ENCODE measurements at regions of chr12 and their contacts with region 1.

Region 1: DNA sequence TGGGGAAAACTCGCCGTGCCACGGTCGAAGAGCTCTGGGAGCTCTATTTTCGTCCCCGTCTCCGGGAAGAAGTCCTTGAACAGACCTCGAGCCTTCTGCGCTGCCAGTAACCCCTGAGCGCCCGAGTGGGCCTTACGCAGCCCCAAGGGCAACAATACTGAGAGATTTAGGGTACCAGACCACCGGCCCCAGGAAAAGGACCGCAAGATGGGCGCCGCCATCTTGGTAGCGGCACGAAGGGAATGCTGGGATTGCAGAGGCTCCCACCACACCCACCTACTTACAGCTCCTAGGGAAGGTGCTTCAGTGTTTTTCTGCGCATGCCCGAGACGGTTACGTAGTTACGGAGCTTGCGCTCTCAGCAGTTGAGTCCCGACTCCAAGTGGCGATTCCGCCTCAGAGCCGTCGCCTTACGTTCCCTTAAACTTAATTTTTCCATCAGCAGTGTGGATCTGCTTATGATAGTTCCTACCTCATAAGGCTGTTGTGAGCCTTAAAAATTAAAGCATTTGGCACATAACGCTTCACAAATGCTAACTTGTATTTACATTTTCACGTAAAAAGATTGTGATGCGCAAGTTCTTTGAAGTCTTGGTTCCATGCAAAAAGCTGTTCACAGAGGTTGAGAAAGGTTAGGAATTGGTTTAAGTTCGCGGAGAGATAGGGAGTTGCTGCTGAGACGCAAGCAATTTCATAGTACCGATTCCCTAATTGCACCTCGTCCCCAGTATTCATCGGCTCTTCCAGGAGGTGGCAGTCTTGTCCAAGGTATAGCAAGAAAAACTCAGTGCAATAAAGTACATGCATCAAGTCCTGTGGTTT is at the start of gene YARS2:
- DNase-seq: peak; percentile 92
- ATAC-seq: peak; percentile 94
- H3K4me3 ChIP-seq: peak within 1 kb of the TSS; percentile 77
- H3K27ac ChIP-seq: peak within 1 kb of the TSS; percentile 89
- H3K4me1 ChIP-seq: no peaks in the 10 kb centered on the region
- H3K27me3 ChIP-seq: no peaks in the 10 kb centered on the region
- CTCF ChIP-seq: peak; percentile 73 to 91 (median 77)
- EP300 ChIP-seq: no peak
- POLR2A ChIP-seq: peak; percentile 88
- RAD21 ChIP-seq: peak; percentile 98
- polyA plus RNA-seq, gene YARS2: 13.4 to 20.0 TPM

Region 2: DNA sequence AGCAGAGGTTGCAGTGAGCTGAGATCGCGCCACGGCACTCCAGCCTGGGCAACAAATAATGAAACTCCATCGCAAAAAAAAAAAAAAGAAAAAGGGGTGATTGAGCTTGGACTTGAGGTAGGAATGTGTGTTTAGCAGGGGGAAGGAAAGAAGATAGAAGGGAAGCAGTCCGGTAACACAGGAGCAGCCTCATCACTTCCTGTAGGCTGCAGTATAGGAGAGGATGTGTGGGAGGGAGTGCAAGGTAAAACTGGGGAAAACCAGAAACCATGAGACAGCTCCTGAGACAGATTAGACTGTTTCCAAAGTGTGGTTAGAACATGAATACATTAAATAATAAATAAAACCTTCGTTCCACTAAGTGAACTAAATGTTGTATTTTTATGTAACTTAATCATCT is 307.3 kb before region 1 on chr12:
- CTCF ChIA-PET with region 1: interaction called, 21 read pairs
- POLR2A ChIA-PET with region 1: no interaction called
- RAD21 ChIA-PET with region 1: interaction called, 3 read pairs
- SMC1A ChIA-PET with region 1: interaction called, 20 read pairs
- in situ Hi-C with region 1: no loop called
- intact Hi-C with region 1: no loop called
- DNase-seq: no peak
- ATAC-seq: peak; percentile 57
- H3K4me3 ChIP-seq: no peak overlapping the region
- H3K27ac ChIP-seq: no peak overlapping the region
- H3K4me1 ChIP-seq: no peaks in the 10 kb centered on the region; the same call in 1 of the 2 replicates
- H3K27me3 ChIP-seq: no peaks in the 10 kb centered on the region
- CTCF ChIP-seq: peak in 2 of 3 experiments; percentile 9 to 25; a peak in 2 of 6 replicates
- EP300 ChIP-seq: no peak
- POLR2A ChIP-seq: no peak
- RAD21 ChIP-seq: no peak

Region 3: DNA sequence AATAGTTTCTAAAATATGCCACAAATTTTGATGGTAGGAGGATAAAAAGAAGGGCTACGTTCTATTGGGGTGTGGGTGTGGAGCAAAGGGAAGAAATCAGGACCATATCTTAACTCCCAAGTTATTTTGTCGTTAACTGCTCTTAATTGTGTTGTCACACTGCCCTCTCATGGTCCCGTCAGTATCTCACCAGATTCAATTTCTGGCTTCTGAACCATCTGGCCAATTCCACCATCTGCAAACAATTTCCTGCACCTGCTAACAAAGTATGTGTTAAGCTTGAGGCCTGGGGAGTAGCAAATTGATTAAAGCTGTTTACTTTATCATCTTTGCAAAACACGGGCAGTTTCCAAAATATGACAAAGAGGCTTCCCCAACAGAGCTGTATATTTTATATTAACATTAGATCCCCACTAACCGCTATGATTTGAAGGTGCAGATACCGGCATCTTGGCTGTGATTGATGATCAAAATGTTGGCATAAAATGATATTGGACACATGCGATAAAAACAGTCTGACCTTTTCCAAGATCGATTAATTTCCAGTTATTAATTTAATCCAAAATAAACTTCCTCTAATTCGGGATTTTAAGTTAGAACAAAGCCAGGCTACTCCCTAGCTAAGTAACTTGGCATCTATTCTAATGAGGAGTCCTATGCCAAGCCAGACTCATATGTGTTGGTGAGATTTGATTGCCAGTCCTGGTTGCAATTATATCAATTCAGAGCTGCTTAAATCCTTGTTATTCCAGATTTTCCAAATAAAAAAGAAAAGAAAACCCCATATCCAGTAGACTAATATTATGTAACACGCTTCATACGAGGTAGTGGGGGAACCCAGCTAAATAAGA is 83.7 kb before region 1 on chr12:
- CTCF ChIA-PET with region 1: interaction called, 26 read pairs
- POLR2A ChIA-PET with region 1: interaction called, 4 read pairs
- RAD21 ChIA-PET with region 1: interaction called, 23 read pairs
- SMC1A ChIA-PET with region 1: interaction called, 11 read pairs
- in situ Hi-C with region 1: no loop called
- intact Hi-C with region 1: no loop called
- DNase-seq: no peak
- ATAC-seq: peak; percentile 74
- H3K4me3 ChIP-seq: no peak overlapping the region
- H3K27ac ChIP-seq: no peak overlapping the region
- H3K4me1 ChIP-seq: peaks cover 10% of the 10 kb centered on the region
- H3K27me3 ChIP-seq: no peaks in the 10 kb centered on the region
- CTCF ChIP-seq: peak; percentile 56 to 76 (median 72); a peak in 5 of 6 replicates
- EP300 ChIP-seq: no peak
- POLR2A ChIP-seq: no peak
- RAD21 ChIP-seq: peak; percentile 87

Region 4: GRCh38 chr12:32706335-32707024 is 49.4 kb before region 1 on chr12:
- CTCF ChIA-PET with region 1: interaction called, 15 read pairs
- POLR2A ChIA-PET with region 1: interaction called, 3 read pairs
- RAD21 ChIA-PET with region 1: interaction called, 3 read pairs
- SMC1A ChIA-PET with region 1: interaction called, 6 read pairs
- in situ Hi-C with region 1: no loop called
- intact Hi-C with region 1: no loop called
- DNase-seq: no peak
- ATAC-seq: no peak
- H3K4me3 ChIP-seq: no peak overlapping the region
- H3K27ac ChIP-seq: no peak overlapping the region
- H3K4me1 ChIP-seq: no peaks in the 10 kb centered on the region
- H3K27me3 ChIP-seq: no peaks in the 10 kb centered on the region
- CTCF ChIP-seq: no peak
- EP300 ChIP-seq: no peak
- POLR2A ChIP-seq: no peak
- RAD21 ChIP-seq: no peak

Region 5: DNA sequence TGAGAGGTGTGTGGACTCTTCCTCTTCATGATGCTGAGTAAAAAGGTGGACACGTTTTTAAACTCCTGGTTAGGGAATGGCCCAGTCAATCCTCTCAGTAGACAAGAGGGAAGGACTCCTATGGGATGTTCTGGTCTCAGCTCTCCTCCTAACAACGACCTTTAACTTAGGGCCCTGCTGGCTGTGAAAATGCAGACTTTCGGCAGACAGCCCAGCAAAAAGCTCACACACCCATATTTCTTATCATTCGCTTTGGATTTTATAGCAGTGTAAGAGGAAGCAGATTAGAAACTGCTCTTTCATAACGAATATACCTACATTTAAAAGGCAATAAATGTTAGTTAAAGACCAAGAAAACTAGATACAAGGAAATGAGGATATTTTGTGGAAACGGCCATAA is 17.8 kb after region 1 on chr12:
- CTCF ChIA-PET with region 1: interaction called, 25 read pairs
- POLR2A ChIA-PET with region 1: no interaction called
- RAD21 ChIA-PET with region 1: interaction called, 11 read pairs
- SMC1A ChIA-PET with region 1: interaction called, 23 read pairs
- in situ Hi-C with region 1: no loop called
- intact Hi-C with region 1: no loop called
- DNase-seq: no peak
- ATAC-seq: no peak
- H3K4me3 ChIP-seq: no peak overlapping the region
- H3K27ac ChIP-seq: no peak overlapping the region
- H3K4me1 ChIP-seq: no peaks in the 10 kb centered on the region
- H3K27me3 ChIP-seq: no peaks in the 10 kb centered on the region
- CTCF ChIP-seq: no peak
- EP300 ChIP-seq: no peak
- POLR2A ChIP-seq: no peak
- RAD21 ChIP-seq: no peak

Region 6: DNA sequence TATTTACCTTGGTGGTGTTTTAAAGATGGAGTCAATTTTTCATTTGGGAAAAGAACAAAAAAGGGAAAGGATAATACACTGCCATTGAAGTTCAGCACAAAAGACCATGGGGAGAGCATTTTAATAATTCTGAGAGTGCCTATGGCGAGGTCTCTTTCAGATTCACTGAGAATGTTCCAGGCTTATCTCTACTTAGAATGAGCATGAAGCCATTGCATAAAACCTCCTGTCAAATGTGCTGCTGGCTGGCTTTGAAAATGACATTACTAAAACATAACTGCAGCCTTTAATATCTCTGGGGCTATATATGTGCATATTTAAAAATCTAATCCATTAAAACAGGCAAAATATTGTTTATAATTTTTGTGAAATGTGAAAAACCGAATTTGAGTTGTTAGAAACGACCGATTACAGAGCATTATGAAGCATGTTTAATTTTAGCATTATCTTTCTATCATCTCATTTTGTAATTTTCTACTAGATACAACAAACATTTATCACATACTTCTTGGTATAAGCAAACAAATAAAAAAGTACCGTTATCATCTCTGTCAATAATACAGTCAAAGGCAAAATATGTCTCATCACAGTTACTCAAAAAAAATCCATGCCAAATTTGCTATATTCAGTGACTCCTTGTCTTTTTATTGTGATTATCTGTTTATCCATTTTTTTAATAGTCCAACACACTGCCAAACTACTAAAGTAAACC is 45.6 kb after region 1 on chr12:
- CTCF ChIA-PET with region 1: no interaction called
- POLR2A ChIA-PET with region 1: no interaction called
- RAD21 ChIA-PET with region 1: no interaction called
- SMC1A ChIA-PET with region 1: no interaction called
- in situ Hi-C with region 1: no loop called
- intact Hi-C with region 1: no loop called
- DNase-seq: no peak
- ATAC-seq: no peak
- H3K4me3 ChIP-seq: no peak overlapping the region
- H3K27ac ChIP-seq: no peak overlapping the region
- H3K4me1 ChIP-seq: no peaks in the 10 kb centered on the region
- H3K27me3 ChIP-seq: no peaks in the 10 kb centered on the region
- CTCF ChIP-seq: no peak
- EP300 ChIP-seq: no peak
- POLR2A ChIP-seq: no peak
- RAD21 ChIP-seq: no peak

Region 7: DNA sequence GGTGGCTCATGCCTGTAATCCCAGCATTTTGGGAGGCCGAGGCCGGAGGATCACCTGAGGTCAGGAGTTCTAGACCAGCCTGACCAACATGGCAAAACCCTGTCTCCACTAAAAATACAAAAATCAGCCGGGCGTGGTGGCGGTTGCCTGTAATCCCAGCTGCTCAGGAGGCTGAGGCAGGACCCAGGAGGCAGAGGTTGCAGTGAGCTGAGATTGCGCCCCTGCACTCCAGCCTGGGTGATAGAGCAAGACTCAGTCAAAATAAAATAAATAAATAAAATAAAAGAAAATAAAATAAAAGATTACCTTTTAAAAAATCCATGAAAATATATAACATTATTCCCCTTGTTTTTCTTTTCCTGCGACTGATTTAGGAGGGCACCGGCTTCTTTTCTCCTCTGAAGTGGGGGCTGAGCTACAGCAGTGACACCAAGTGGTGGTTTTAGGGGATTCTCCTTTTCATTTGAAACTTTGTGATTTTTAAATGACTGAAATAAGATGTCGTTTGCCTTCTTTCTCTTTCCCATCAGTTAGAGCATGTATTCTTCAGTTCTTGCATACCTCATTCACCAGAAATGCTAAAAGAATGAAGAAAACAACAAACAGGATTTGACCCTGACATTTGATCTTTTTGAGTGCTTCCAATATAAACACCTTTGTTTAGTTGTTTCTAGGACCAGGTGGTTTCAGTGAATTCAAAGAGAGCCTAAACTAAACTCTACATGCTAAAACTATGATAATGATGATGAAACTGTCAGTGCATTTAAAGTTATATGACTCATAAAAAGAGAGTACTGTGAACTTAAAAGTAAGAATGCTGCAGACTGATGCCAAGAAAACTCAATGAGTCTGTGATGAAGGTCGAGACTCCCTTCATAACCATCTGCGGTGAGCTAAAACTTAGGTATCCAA is 163.3 kb after region 1 on chr12:
- CTCF ChIA-PET with region 1: interaction called, 85 read pairs
- POLR2A ChIA-PET with region 1: no interaction called
- RAD21 ChIA-PET with region 1: interaction called, 22 read pairs
- SMC1A ChIA-PET with region 1: interaction called, 61 read pairs
- in situ Hi-C with region 1: loop called (anchors 5 kb)
- intact Hi-C with region 1: loop called (anchors 1 kb)
- DNase-seq: no peak
- ATAC-seq: peak; percentile 61
- H3K4me3 ChIP-seq: no peak overlapping the region
- H3K27ac ChIP-seq: no peak overlapping the region
- H3K4me1 ChIP-seq: no peaks in the 10 kb centered on the region
- H3K27me3 ChIP-seq: no peaks in the 10 kb centered on the region
- CTCF ChIP-seq: peak; percentile 44 to 56 (median 47); a peak in 5 of 6 replicates
- EP300 ChIP-seq: no peak
- POLR2A ChIP-seq: no peak
- RAD21 ChIP-seq: peak; percentile 78

Region 8: GRCh38 chr12:34363050-34363673 is 1607.3 kb after region 1 on chr12:
- CTCF ChIA-PET with region 1: no interaction called
- POLR2A ChIA-PET with region 1: no interaction called
- RAD21 ChIA-PET with region 1: no interaction called
- SMC1A ChIA-PET with region 1: no interaction called
- in situ Hi-C with region 1: loop called (anchors 25 kb)
- intact Hi-C with region 1: no loop called
- DNase-seq: no peak
- ATAC-seq: no peak
- H3K4me3 ChIP-seq: no peak overlapping the region
- H3K27ac ChIP-seq: no peak overlapping the region
- H3K4me1 ChIP-seq: no peaks in the 10 kb centered on the region
- H3K27me3 ChIP-seq: no peaks in the 10 kb centered on the region
- CTCF ChIP-seq: no peak
- EP300 ChIP-seq: no peak
- POLR2A ChIP-seq: no peak
- RAD21 ChIP-seq: no peak